ENCODE measurements at regions of chr14 and their contacts with region 1.

Region 1: GRCh38 chr14:96741151-96741977 is 55.8 kb upstream of the VRK1 start:
- DNase-seq: peak; percentile 84
- CTCF ChIP-seq: peak; percentile 96

Region 2: GRCh38 chr14:96729889-96730288 is 11.5 kb before region 1 on chr14:
- CTCF ChIA-PET with region 1: interaction called, 12 read pairs
- POLR2A ChIA-PET with region 1: no interaction called
- DNase-seq: no peak
- CTCF ChIP-seq: no peak